ENCODE measurements at regions of chr3 and their contacts with region 1.

Region 1: DNA sequence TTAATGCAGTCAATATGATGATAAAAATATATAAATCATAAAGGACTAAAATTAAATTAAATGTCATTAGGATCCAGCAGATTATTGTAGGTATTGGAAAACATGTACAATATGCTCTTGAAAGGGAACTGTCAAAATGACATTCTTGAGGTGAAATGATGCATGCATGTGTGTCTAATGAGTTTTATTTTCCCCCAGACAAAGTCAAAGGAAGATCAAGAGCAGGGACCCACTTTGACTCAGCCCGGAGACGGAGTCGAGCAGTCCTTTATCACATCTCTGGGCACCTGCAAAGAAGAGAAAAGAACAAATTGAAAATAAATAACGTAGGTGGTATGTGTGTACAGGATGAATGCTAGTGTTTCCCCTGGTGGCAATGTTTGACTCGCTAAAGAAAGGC is 194.1 kb downstream of the KCNH8 start:
- DNase-seq: no peak
- H3K4me3 ChIP-seq: no peak overlapping the region
- H3K27ac ChIP-seq: no peak overlapping the region
- H3K4me1 ChIP-seq: no peaks in the 10 kb centered on the region
- H3K27me3 ChIP-seq: no peaks in the 10 kb centered on the region
- CTCF ChIP-seq: no peak
- POLR2A ChIP-seq: no peak

Region 2: GRCh38 chr3:18795078-18795477 is 547.3 kb before region 1 on chr3:
- intact Hi-C with region 1: no loop called
- DNase-seq: no peak
- H3K4me3 ChIP-seq: no peak overlapping the region
- H3K27ac ChIP-seq: no peak overlapping the region
- H3K4me1 ChIP-seq: no peaks in the 10 kb centered on the region
- H3K27me3 ChIP-seq: no peaks in the 10 kb centered on the region
- CTCF ChIP-seq: no peak
- POLR2A ChIP-seq: no peak

Region 3: DNA sequence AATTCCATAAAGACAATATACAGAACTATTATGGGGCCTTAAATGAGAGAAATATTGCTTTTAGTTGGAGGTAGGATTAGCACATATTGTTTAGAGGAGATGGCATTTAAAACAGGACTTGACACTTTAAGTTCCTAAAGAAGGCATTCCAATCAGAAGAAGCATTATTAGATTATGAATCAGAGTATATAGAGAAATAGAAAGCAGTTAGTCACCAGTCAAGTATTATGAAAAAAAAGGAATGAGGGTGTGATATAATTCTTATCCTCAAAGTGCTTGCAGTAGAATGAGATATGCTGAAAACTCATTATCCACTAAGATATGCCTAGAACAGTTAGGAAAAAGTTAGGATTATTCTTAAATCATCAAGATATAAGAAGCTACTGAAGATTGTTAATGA is 1952.4 kb after region 1 on chr3:
- intact Hi-C with region 1: loop called (anchors 5 kb)
- DNase-seq: no peak
- H3K4me3 ChIP-seq: no peak overlapping the region
- H3K27ac ChIP-seq: no peak overlapping the region
- H3K4me1 ChIP-seq: no peaks in the 10 kb centered on the region
- H3K27me3 ChIP-seq: no peaks in the 10 kb centered on the region
- CTCF ChIP-seq: no peak
- POLR2A ChIP-seq: no peak